ENCODE measurements at regions of chr1 and their contacts with region 1.

Region 1: GRCh38 chr1:111570781-111571181 is 48.8 kb upstream of the RAP1A start:
- DNase-seq: peak; percentile 18 to 47 (median 34)
- H3K4me3 ChIP-seq: no peak overlapping the region
- H3K4me3 Mint-ChIP-seq: peak overlapping the region in 1 of 8 donors; percentile 3
- H3K27ac ChIP-seq: no peak overlapping the region
- H3K27ac Mint-ChIP-seq: no peak overlapping the region
- H3K4me1 ChIP-seq: peaks cover 6% of the 10 kb centered on the region
- H3K4me1 Mint-ChIP-seq: peaks cover 7 to 10% (median 8%) of the 10 kb centered on the region in 4 donors
- H3K27me3 ChIP-seq: no peaks in the 10 kb centered on the region
- H3K27me3 Mint-ChIP-seq: no peaks in the 10 kb centered on the region

Region 2: DNA sequence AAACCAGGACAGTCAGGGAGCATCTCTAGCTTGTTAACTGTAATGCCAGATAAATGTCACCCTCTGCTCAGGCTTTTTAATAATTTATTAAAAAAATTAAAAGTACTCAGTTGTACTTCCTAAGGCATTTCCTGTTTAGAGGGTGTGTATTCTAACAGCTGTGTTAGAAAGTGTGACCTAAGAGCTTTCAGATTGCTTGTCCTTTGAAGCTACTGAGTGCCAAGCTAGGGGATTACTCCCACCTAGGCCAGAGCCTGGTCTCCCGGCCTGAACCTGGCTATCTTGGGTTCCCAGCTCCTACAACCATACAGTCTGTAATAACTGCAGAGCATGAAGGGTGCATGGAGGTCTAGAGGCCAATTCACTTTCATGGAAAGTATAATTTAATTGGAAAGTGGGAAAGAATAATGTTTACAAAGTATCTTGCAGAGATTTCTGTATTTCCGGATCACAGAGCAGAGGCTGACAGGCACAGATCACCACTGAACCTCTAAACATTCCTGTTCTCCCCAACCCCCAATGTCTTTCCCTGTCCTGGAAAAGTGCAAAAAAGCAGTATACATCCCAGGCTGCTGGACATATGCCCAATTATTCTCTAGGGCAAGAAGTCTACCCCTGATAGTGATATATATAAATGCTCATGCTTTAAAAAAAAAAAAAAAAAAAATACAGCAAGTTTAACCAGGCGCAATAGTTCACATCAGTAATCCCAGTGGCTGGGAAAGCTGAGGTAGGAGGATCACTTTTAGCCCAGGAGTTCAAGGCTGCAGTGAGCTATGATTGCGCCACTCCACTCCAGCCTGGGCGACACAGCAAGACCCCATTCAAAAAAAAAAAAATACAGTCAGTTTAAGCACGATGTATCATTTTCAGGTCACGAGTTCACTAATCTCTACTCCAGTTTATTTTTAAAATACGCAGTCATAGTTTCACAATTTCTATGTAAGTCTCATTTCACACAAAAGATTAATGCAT is 12.2 kb after region 1 on chr1:
- CTCF ChIA-PET with region 1: interaction called, 11 read pairs
- POLR2A ChIA-PET with region 1: interaction called, 4 read pairs
- intact Hi-C with region 1: no loop called
- DNase-seq: no peak
- H3K4me3 ChIP-seq: no peak overlapping the region
- H3K4me3 Mint-ChIP-seq: no peak overlapping the region
- H3K27ac ChIP-seq: no peak overlapping the region
- H3K27ac Mint-ChIP-seq: peak overlapping the region in 1 of 7 donors; percentile 21
- H3K4me1 ChIP-seq: peaks cover 16% of the 10 kb centered on the region
- H3K4me1 Mint-ChIP-seq: peaks cover 5 to 18% (median 8%) of the 10 kb centered on the region in 4 donors
- H3K27me3 ChIP-seq: no peaks in the 10 kb centered on the region
- H3K27me3 Mint-ChIP-seq: no peaks in the 10 kb centered on the region

Region 3: DNA sequence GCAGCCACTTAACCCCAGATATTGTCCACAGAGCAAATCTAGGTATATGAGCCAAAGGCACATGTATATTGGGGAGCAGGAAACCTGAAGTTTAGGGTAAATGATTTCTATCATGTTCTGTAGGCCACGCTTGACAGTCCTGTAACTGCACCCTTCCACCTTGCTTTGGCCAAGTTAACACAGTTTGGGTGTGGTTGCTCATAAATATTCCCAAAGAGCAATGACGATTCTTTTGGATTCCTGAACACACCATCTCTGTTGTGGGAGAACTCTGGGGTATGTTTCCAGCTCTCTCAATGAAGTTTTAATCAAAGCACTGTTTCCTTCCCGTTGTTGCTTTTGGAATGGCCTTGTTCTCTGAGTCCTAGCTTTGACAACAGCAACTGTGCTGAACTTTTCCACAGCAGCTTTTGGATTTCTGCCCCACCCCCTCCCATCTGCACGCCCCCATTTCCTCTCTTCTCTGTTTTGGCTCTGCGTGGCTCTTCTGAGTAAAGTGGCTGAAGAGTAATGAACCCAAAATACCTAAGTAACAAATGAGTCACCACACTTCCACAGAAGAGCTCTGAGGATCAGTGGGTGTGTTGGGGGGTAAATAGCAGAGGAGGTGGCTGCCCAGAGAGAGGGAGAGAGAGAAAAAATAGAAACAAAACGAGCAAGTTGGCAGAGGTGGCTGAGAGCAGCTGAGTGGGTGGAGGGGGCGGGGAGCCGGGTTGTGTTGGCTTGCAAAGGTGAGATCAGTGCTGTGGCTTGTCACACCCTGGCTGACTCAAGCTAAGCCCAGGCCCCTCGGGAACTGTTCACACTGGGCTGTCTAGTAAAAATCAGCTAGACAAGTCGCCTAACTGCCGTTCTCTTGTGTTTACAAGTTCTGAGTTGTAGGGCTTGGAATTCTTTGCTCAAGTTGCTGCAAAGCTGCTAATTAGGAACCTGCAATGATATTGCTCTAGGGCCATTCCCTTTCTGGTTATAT is 21.9 kb after region 1 on chr1:
- CTCF ChIA-PET with region 1: interaction called, 19 read pairs
- POLR2A ChIA-PET with region 1: interaction called, 5 read pairs
- intact Hi-C with region 1: no loop called
- DNase-seq: peak; percentile 66 to 98 (median 77)
- H3K4me3 ChIP-seq: peak overlapping the region in 1 of 2 donors; percentile 15
- H3K4me3 Mint-ChIP-seq: peak overlapping the region; percentile 6 to 81 (median 69)
- H3K27ac ChIP-seq: peak overlapping the region; percentile 46
- H3K27ac Mint-ChIP-seq: peak overlapping the region; percentile 85 to 94 (median 92)
- H3K4me1 ChIP-seq: peaks cover 68% of the 10 kb centered on the region
- H3K4me1 Mint-ChIP-seq: peaks cover 48 to 57% (median 51%) of the 10 kb centered on the region in 4 donors
- H3K27me3 ChIP-seq: no peaks in the 10 kb centered on the region
- H3K27me3 Mint-ChIP-seq: no peaks in the 10 kb centered on the region

Region 4: DNA sequence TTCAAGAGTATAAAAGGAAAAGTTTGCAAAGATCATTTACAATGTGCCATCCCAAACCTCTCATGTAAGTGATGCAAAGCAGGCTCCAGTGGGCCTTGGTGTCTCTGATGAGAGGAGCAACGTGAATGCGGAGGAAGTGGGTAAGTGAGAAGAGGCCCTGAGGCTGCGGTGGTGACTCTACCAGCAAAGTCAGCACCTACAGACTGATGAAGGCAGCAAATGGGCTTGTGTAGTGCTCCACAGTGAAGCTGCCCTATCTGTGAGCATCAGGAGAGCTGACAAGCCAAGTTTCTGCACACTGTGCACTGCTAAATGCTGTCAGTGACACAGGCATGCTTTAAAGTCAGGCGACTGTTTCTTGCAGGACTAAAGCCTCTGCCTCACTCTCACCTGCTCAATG is 33.2 kb after region 1 on chr1:
- CTCF ChIA-PET with region 1: interaction called, 11 read pairs
- POLR2A ChIA-PET with region 1: interaction called, 5 read pairs
- intact Hi-C with region 1: no loop called
- DNase-seq: peak; percentile 80 to 91 (median 85)
- H3K4me3 ChIP-seq: no peak overlapping the region
- H3K4me3 Mint-ChIP-seq: peak overlapping the region; percentile 26 to 89 (median 72)
- H3K27ac ChIP-seq: peak overlapping the region; percentile 27
- H3K27ac Mint-ChIP-seq: peak overlapping the region; percentile 85 to 97 (median 91)
- H3K4me1 ChIP-seq: peaks cover 78% of the 10 kb centered on the region
- H3K4me1 Mint-ChIP-seq: peaks cover 58 to 80% (median 73%) of the 10 kb centered on the region in 4 donors
- H3K27me3 ChIP-seq: no peaks in the 10 kb centered on the region
- H3K27me3 Mint-ChIP-seq: no peaks in the 10 kb centered on the region

Region 5: GRCh38 chr1:111638320-111638719 is 67.5 kb after region 1 on chr1:
- CTCF ChIA-PET with region 1: no interaction called
- POLR2A ChIA-PET with region 1: no interaction called
- intact Hi-C with region 1: no loop called
- DNase-seq: no peak
- H3K4me3 ChIP-seq: no peak overlapping the region
- H3K4me3 Mint-ChIP-seq: peak overlapping the region; percentile 17 to 80 (median 50)
- H3K27ac ChIP-seq: no peak overlapping the region
- H3K27ac Mint-ChIP-seq: peak overlapping the region; percentile 53 to 72 (median 67)
- H3K4me1 ChIP-seq: peaks cover 70% of the 10 kb centered on the region
- H3K4me1 Mint-ChIP-seq: peaks cover 34 to 74% (median 62%) of the 10 kb centered on the region in 4 donors
- H3K27me3 ChIP-seq: no peaks in the 10 kb centered on the region
- H3K27me3 Mint-ChIP-seq: no peaks in the 10 kb centered on the region

Region 6: DNA sequence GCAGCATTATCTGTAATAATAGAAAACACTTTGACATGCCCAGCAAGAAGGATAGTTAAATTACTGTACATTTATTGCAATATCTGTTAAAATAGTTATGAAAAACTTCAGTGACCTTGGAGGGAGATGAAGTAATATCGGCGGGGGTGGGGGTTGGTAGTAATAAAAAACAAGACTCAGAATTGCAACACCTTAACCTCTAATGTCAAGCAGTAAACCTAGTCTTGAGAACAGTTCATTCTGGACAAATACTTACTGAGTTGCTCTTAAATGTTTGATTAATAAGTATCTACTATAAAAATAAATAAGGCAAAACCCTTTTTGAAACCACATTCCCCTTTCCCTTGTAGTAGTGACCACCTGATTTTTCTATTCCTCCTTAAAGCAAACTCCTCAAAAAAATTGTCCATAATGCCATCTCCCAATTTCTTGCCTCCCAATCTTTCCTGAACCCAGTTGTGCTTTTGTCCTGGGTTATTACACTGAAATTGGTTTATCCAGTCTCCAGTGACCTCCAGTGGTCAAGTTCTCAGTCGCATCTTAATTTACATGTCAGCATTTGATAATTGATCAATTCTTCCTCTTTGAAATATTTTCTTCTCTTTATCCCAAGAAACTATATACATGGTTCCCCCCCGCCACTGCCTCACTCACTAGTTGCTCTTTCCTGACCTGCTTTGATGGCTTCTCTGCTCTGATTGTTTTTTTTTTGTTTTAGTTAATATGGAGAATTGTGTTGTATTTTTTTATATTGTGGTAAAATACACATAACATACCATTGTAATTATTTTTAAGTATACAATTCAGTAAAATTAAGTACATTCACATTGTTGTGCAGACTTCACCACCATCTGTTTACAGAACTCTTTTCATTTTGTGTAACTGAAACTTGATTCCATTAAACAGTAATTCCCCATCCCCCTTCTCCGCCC is 85.6 kb after region 1 on chr1:
- CTCF ChIA-PET with region 1: no interaction called
- POLR2A ChIA-PET with region 1: no interaction called
- intact Hi-C with region 1: loop called (anchors 5 kb)
- DNase-seq: peak in 4 of 5 donors; percentile 18 to 39 (median 36)
- H3K4me3 ChIP-seq: no peak overlapping the region
- H3K4me3 Mint-ChIP-seq: peak overlapping the region in 4 of 8 donors; percentile 16 to 53 (median 28)
- H3K27ac ChIP-seq: no peak overlapping the region
- H3K27ac Mint-ChIP-seq: peak overlapping the region in 5 of 7 donors; percentile 8 to 57 (median 45)
- H3K4me1 ChIP-seq: peaks cover 84% of the 10 kb centered on the region
- H3K4me1 Mint-ChIP-seq: peaks cover 38 to 51% (median 45%) of the 10 kb centered on the region in 4 donors
- H3K27me3 ChIP-seq: no peaks in the 10 kb centered on the region
- H3K27me3 Mint-ChIP-seq: no peaks in the 10 kb centered on the region

Measured in CD4-positive, alpha-beta memory T cell (primary cell).